Breast epithelium (tissue), 4 donors: ENCODE measurements at regions of chr12 and their contacts with region 1.

Region 1: DNA sequence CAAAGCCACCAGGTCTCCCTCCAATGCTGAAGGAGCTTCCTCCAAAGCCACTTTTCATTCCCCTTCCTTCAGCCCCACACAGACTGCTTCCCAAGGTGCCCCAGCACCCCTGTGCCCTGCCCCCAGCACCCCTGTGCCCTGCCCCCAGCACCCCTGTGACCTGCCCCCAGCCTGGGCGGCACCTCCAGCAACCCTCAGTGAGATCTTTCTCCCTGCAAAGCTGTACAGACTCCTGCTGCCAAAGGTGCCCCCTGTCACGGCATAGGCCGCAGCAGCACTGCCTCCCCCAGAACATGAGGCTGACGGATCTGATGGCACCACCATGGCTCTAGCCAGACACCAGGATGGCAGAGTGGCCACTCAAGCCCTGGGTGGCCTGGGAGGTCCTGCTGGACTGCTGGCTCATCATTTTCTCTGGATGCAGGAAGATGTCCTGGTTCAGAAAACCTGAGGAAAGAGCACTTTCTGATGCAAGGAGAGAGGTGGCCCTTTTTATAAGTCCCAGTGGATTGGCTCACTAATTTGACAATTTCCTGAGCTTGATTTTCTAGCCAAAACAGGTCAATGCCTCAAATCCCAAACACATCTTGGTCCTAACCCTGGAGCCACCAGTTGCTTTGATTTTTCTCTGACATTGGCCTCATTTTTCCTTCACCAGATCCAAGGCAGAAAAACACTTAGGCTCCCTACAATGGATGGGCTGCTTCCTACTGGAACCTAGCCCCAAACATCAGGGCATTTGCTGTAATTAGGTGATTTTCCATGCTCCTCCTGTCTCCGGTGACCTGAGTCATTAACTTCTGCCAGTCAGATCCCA is 32.7 kb upstream of the KRT77 start:
- DNase-seq: no peak
- H3K4me3 ChIP-seq: no peak overlapping the region
- H3K27ac ChIP-seq: no peak overlapping the region
- H3K4me1 ChIP-seq: no peaks in the 10 kb centered on the region
- H3K27me3 ChIP-seq: peaks cover 0 to 19% of the 10 kb centered on the region in 2 donors
- CTCF ChIP-seq: no peak
- POLR2A ChIP-seq: no peak

Region 2: DNA sequence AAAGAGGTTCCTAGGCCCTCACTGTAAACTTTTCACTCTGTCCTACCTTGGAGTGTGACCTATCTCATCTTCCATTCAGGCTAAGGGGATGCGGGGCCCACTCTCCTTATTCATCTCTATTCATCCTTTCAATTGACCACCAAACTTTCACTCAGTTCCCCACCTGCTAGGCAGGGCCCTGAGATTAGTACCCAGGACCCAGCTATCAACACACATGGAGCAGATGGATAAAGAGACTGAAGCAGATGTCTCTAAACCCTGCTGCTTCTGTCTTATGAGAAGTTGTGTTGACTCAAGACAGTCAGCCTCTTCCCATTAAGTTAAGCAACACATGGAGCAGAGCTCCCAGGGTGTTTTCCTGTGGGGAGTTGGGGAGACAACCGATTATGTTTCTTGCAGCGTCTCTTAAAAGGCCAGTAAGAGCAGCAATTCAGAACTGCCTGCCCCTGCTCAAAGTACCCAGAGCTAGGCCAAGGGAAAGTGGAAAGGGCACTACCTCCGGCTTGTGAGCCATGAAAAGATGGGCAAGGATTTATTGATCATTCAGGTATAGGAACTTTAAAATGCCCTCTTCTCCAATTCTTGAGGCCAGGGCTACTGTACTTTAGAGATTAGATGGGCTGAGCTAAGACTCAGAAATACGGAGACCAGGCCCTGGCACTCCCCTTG is 30.5 kb after region 1 on chr12:
- intact Hi-C with region 1: loop called (anchors 1 kb)
- DNase-seq: no peak
- H3K4me3 ChIP-seq: no peak overlapping the region
- H3K27ac ChIP-seq: no peak overlapping the region
- H3K4me1 ChIP-seq: no peaks in the 10 kb centered on the region
- H3K27me3 ChIP-seq: no peaks in the 10 kb centered on the region
- CTCF ChIP-seq: no peak
- POLR2A ChIP-seq: no peak

Region 3: GRCh38 chr12:52826611-52827498 is 90.8 kb after region 1 on chr12:
- intact Hi-C with region 1: no loop called
- DNase-seq: no peak
- H3K4me3 ChIP-seq: no peak overlapping the region
- H3K27ac ChIP-seq: no peak overlapping the region
- H3K4me1 ChIP-seq: no peaks in the 10 kb centered on the region
- H3K27me3 ChIP-seq: no peaks in the 10 kb centered on the region
- CTCF ChIP-seq: no peak
- POLR2A ChIP-seq: no peak